ENCODE measurements at regions of chr1 and their contacts with region 1.

Region 1: GRCh38 chr1:34013958-34014737 is 150.3 kb downstream of the HMGB4 start:
- DNase-seq: no peak
- ATAC-seq: peak; percentile 60
- H3K4me3 ChIP-seq: no peak overlapping the region
- H3K27ac ChIP-seq: no peak overlapping the region
- H3K4me1 ChIP-seq: no peaks in the 10 kb centered on the region
- H3K27me3 ChIP-seq: no peaks in the 10 kb centered on the region; a peak in 1 of 4 replicates
- CTCF ChIP-seq: peak; percentile 50 to 64 (median 61)
- EP300 ChIP-seq: no peak
- POLR2A ChIP-seq: no peak
- RAD21 ChIP-seq: 0 out of 2 replicates have a peak, but pooled peaks have one; percentile 22

Region 2: GRCh38 chr1:34025675-34026074 is 11.5 kb after region 1 on chr1:
- CTCF ChIA-PET with region 1: interaction called, 12 read pairs
- POLR2A ChIA-PET with region 1: no interaction called
- RAD21 ChIA-PET with region 1: no interaction called
- SMC1A ChIA-PET with region 1: no interaction called
- in situ Hi-C with region 1: no loop called
- intact Hi-C with region 1: no loop called
- DNase-seq: no peak
- ATAC-seq: no peak
- H3K4me3 ChIP-seq: no peak overlapping the region
- H3K27ac ChIP-seq: no peak overlapping the region
- H3K4me1 ChIP-seq: no peaks in the 10 kb centered on the region
- H3K27me3 ChIP-seq: no peaks in the 10 kb centered on the region
- CTCF ChIP-seq: no peak
- EP300 ChIP-seq: no peak
- POLR2A ChIP-seq: no peak
- RAD21 ChIP-seq: no peak

Region 3: DNA sequence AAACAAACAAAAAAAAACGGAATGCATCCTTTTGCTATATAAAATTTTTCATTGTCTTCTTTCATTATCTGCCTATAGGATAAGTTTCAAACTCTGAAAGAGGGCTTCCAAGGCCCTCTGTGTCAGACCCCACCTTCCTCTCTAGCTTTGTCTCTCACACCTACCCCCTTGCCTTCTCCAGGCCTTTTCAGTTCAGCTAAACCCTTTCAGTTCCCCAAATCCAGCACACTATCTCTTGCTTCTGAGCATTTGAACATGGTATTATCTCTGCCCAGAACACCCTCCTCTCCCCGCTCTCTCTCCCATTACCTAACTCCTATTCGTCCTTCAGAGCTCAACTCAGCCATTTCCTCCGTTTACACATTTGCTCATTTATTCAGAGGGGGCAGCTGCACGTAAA is 1668.9 kb after region 1 on chr1:
- CTCF ChIA-PET with region 1: no interaction called
- POLR2A ChIA-PET with region 1: no interaction called
- RAD21 ChIA-PET with region 1: no interaction called
- SMC1A ChIA-PET with region 1: no interaction called
- in situ Hi-C with region 1: no loop called
- intact Hi-C with region 1: no loop called
- DNase-seq: peak; percentile 3
- ATAC-seq: peak; percentile 85
- H3K4me3 ChIP-seq: no peak overlapping the region
- H3K27ac ChIP-seq: no peak overlapping the region
- H3K4me1 ChIP-seq: no peaks in the 10 kb centered on the region
- H3K27me3 ChIP-seq: 0 out of 4 replicates have a peak, but pooled peaks cover 0 to 2% of the 10 kb centered on the region in 2 experiments
- CTCF ChIP-seq: no peak
- EP300 ChIP-seq: no peak
- POLR2A ChIP-seq: no peak
- RAD21 ChIP-seq: no peak